RWPE1 (cell line): ENCODE measurements at regions of chr22 and their contacts with region 1.

Region 1: DNA sequence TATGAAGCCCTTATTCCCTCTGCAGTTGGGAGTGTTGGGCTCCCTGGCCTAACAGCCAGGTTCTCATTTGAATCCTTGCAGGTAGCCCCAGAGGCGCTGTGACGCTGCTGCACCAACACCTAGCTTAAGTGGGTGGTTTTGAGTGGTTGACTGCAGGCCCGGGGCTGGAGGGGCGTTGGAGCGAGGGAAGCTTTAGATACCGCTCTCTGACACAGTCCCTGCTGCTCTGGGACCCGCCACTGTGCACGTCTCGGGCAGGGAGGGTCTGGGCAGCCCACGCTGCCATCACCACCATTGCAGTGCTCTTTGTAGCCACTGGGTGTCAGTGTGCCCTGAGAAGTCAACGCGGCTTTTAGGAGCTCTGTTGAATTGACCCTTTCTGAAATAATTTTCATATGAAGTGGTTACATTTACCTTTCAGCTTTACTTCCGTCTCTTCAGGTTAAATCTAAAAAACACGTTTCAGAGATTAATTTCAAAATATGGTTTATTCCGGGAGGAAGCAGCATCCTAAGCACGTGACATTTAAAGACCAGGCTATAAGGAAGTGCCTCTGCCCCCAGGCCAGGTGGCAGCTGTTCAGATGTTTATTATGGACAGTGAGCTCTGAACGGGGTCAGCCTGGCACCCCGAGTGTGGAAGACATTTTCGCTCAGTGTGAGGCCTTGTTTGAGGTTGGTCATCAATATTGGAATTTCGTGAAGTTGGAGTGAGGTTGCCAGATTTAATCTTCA is 30.9 kb upstream of the PARVB start:
- DNase-seq: peak; percentile 46
- H3K27ac ChIP-seq: no peak overlapping the region
- CTCF ChIP-seq: peak; percentile 93

Region 2: GRCh38 chr22:44080936-44081861 is 88.0 kb after region 1 on chr22:
- CTCF ChIA-PET with region 1: interaction called, 30 read pairs
- POLR2A ChIA-PET with region 1: no interaction called
- DNase-seq: peak; percentile 59
- H3K27ac ChIP-seq: no peak overlapping the region
- CTCF ChIP-seq: peak; percentile 92

Region 3: DNA sequence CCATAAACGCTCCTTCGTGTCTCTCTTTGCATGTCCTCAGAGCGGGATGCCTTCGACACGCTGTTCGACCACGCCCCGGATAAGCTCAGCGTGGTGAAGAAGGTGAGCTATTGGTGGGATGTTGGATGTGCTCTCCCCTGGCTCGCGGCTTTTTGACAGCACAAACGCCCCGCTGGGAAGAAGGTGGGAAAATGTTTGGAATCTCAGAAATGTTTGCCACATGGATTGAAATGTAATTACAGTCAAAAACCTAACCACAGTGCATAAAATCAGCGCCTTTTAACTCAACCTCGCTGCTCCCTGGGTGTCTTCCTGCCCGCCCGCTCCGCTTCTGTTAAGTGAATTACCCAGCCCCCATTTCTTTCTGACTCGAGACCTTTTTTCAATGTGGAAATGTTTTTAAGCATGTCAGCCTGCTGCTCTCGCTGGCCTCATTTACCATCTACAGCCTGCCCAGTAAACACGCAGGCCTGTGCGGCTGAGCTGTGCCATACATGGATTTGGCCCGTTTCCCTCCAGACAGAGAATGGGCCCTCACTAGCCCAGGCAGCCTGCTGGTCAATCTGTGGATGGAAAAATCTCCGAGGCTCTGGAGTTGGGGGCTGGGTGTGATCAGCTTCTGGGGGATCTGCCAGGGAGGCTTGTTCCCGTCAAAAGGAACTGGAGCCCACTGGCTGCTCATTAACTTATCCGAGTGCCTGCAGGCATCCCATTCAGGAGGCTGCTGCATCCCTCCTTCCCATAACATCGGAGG is 154.8 kb after region 1 on chr22:
- CTCF ChIA-PET with region 1: no interaction called
- POLR2A ChIA-PET with region 1: no interaction called
- DNase-seq: no peak
- H3K27ac ChIP-seq: no peak overlapping the region
- CTCF ChIP-seq: no peak

Region 4: DNA sequence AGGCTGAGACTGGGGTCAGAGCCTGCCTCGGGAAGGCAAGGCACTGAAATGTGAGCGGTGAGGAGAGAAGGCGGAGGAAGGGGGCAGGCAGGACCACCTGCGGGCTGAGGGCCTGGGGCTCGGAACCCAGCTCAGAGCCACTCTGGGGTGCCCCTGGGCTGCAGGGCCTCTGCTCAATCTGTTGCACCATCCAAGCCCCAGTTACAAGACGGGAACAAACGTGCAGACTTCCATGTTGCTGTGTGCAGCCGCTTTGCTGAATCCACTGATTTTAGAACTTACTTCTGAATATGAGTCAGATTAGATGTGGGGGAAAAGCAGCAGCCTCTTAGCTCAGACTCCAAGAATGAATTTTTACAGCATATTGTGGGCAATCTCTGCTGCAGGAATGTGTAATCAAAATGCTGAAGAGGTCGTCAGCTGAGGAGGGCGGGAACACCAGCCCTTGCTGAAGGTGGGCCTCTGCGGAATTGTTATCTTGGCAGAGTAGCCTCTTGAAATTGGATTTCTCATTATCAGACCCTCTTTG is 209.1 kb after region 1 on chr22:
- CTCF ChIA-PET with region 1: no interaction called
- POLR2A ChIA-PET with region 1: no interaction called
- DNase-seq: no peak
- H3K27ac ChIP-seq: no peak overlapping the region
- CTCF ChIP-seq: no peak

Region 5: DNA sequence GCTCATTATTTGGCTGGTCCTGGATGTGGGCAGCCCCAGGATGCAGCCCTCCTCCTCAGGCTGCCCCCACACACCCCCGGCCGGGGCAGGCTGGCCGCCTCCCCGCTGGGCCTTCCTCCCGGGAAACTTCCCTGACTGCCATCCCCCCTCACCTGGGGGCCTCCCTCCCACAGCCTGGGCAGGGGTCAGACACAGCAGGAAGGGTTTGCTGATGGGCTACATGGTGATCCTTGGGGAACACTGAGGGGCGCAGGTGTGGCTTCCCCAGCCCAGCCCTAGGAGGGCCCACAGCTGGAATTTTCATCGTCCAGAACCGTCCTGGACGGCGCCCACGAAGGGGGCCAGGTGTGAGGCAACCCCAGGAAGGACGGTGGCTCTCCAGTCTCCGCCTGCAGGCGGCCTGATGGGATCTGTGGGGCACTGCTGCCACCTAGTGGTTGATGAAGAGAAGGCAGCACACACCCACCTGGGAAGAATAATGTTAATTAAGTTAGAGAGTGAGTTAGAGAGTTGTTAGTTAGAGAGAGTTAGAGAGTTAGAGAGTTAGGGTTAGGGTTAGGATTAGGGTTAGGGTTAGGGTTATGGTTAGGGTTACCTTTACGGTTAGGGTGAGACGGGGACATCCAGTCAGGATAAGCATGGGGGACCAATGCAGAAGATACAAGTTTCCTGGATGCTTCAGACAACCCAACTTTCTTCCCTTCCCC is 632.9 kb after region 1 on chr22:
- CTCF ChIA-PET with region 1: interaction called, 24 read pairs
- POLR2A ChIA-PET with region 1: no interaction called
- DNase-seq: peak; percentile 55
- H3K27ac ChIP-seq: no peak overlapping the region
- CTCF ChIP-seq: peak; percentile 89